Body of pancreas (tissue), 4 donors: ENCODE measurements at regions of chr2 and their contacts with region 1.

Region 1: GRCh38 chr2:27715318-27716210 is 51.9 kb downstream of the SLC4A1AP start:
- DNase-seq: peak in 2 of 4 donors; percentile 23 to 37
- ATAC-seq: peak; percentile 62
- H3K4me3 ChIP-seq: no peak overlapping the region
- H3K27ac ChIP-seq: peak overlapping the region in 1 of 4 donors; percentile 28
- H3K4me1 ChIP-seq: peaks cover 4% of the 10 kb centered on the region
- H3K27me3 ChIP-seq: peaks cover 0 to 4% of the 10 kb centered on the region in 2 donors
- CTCF ChIP-seq: no peak
- POLR2A ChIP-seq: no peak

Region 2: DNA sequence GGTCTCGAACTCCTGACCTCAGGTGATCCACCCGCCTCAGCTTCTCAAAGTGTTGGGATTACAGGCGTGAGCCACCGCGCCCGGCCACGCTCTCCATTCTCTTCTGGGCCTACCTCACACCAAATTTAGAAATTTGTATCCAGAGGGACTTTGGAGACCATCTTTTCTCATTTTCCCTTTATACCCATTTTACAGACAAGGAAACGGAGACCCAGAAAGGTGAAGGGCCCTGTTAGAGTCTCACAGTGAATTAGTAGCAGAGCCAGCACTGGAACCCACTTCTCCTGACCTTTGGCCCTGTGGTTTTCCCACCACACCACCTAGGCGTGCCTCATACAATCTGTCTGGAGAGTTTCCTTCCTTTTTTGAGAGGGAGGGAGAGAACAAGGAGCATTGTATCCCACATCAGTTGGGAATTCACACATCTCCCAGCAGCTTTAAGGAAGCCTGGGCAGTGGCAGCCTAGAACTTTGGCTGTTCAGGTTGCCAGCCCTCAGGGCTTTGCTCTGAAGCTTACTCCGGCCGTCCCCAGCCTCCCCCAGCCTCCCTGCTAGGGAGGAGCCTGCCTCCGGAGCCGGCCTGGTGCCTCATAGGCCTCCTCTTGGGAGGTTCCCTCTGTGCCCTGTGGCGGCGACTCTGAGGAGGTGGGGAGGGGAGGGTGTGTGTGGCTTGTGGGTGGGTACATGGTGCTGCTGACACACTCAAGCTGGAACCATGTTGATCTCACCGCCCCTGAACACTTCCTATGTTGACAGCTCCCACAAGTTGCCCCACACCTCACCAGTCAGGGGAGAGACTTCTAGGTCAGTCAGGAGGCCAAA is 690.9 kb after region 1 on chr2:
- intact Hi-C with region 1: loop called (anchors 10 kb)
- DNase-seq: peak in 2 of 4 donors; percentile 18 to 66
- ATAC-seq: no peak
- H3K4me3 ChIP-seq: no peak overlapping the region
- H3K27ac ChIP-seq: peak overlapping the region in 1 of 4 donors; percentile 41
- H3K4me1 ChIP-seq: peaks cover 18% of the 10 kb centered on the region
- H3K27me3 ChIP-seq: no peaks in the 10 kb centered on the region
- CTCF ChIP-seq: no peak
- POLR2A ChIP-seq: no peak